Right ventricle myocardium superior (tissue), 1 donor: ENCODE measurements at regions of chr1 and their contacts with region 1.

Region 1: GRCh38 chr1:225652729-225653462 is at the start of gene ENAH:
- DNase-seq: peak; percentile 87
- ATAC-seq: peak; percentile 88
- total RNA-seq, gene ENAH: 70.4 TPM

Region 2: GRCh38 chr1:225480825-225481434 is 172.0 kb before region 1 on chr1:
- intact Hi-C with region 1: loop called (anchors 10 kb)
- DNase-seq: no peak
- ATAC-seq: peak; percentile 61

Region 3: GRCh38 chr1:225746361-225747179 is 93.7 kb after region 1 on chr1:
- intact Hi-C with region 1: no loop called
- DNase-seq: peak; percentile 73
- ATAC-seq: peak; percentile 96

Region 4: DNA sequence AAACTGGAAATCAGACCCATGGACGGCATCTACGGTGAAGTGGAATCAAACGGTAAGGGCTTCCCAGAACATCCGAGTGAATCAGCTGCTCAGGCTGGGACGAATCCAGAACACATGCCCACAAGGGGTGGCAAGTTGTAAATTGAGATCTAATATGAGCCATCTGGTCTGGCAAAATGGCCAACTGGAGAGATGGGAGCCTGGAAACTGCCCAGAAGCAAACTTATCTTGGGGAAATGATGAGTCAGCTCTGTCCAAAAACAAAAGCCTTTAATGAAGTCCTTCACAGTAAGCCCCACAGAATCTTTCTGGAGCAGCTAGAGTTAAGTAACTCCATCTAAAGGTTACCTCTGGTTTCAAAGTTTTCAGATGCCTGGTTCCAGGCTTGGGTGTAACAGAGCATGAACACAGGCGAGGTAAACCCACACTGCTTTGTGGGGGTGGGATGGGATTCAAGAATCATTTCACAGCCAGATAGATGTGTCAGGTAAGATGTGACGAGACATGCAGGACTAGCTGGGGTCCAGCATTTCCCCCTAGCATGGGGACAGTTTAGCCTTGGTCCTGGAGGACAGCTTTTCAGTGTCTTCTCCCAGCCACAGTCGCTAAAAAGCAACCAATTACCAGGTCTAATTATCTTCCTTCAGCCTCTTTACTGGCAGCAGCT is 114.2 kb after region 1 on chr1:
- intact Hi-C with region 1: loop called (anchors 5 kb)
- DNase-seq: peak; percentile 59
- ATAC-seq: peak; percentile 52